Adrenal gland (tissue), 19 donors: ENCODE measurements at regions of chrX and their contacts with region 1.

Region 1: GRCh38 chrX:139559383-139560042 is 29.0 kb downstream of the F9 start:
- DNase-seq: peak in 6 of 7 donors; percentile 34 to 59 (median 52)
- H3K4me3 ChIP-seq: no peak overlapping the region
- H3K27ac ChIP-seq: no peak overlapping the region
- H3K4me1 ChIP-seq: no peaks in the 10 kb centered on the region
- H3K27me3 ChIP-seq: peaks cover 16% of the 10 kb centered on the region
- CTCF ChIP-seq: peak; percentile 36 to 56 (median 46)
- POLR2A ChIP-seq: no peak

Region 2: GRCh38 chrX:138775517-138775916 is 784.0 kb before region 1 on chrX:
- intact Hi-C with region 1: loop called in 1 of 2 experiments (anchors 10 kb)
- DNase-seq: no peak
- H3K4me3 ChIP-seq: no peak overlapping the region
- H3K27ac ChIP-seq: no peak overlapping the region
- H3K4me1 ChIP-seq: no peaks in the 10 kb centered on the region
- H3K27me3 ChIP-seq: peaks cover 9% of the 10 kb centered on the region
- CTCF ChIP-seq: peak in 5 of 6 experiments; percentile 32 to 48 (median 43)
- POLR2A ChIP-seq: no peak

Region 3: DNA sequence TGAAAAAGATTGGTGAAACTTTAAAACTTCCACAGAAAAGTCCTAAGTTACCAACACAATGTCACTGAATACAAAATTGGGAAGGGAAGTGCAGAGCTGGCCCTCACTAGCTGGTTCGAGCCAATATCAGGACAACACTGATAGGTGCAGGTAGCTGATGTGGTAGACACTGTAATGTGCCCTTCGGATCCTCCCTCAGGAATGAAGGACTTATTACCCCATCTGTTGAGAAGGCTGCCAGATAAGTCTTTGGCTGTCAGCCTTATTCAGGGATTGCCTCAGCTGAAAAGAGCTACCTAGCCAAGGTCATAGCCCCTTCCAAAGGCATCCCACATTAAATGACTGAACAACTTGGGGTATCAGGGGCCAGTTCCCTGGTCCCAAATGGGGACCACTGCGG is 143.1 kb after region 1 on chrX:
- intact Hi-C with region 1: no loop called
- DNase-seq: no peak
- H3K4me3 ChIP-seq: no peak overlapping the region
- H3K27ac ChIP-seq: no peak overlapping the region
- H3K4me1 ChIP-seq: no peaks in the 10 kb centered on the region
- H3K27me3 ChIP-seq: no peaks in the 10 kb centered on the region
- CTCF ChIP-seq: no peak
- POLR2A ChIP-seq: no peak